K562 (cell line): ENCODE measurements at regions of chr1 and their contacts with region 1.

Region 1: DNA sequence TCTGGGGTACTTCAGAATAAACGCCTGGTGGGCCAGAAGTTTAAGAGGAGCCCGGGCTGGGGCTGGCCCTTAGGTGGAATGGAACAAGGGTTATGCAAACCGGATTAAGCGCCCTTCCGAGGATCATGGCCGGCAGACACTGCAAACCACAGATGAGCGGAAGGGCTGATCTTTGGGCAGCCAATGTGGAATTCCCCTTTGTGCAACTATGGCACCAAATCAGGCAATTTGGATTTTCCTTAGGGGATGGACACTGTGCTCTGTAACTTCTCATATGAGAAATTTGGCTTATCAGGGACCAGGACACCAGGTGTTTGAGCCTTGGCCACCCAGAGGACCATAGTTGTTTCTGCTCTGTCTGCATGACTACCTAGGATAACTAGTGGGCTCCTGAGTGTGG is 5.7 kb upstream of the IL10 start:
- DNase-seq: no peak
- ATAC-seq: no peak; the same call in 2 of the 3 replicates
- H3K4me3 ChIP-seq: no peak overlapping the region
- H3K27ac ChIP-seq: no peak overlapping the region
- H3K4me1 ChIP-seq: no peaks in the 10 kb centered on the region
- H3K27me3 ChIP-seq: peaks cover 40 to 49% of the 10 kb centered on the region in 2 experiments
- CTCF ChIP-seq: no peak
- EP300 ChIP-seq: no peak
- POLR2A ChIP-seq: no peak
- RAD21 ChIP-seq: no peak

Region 2: DNA sequence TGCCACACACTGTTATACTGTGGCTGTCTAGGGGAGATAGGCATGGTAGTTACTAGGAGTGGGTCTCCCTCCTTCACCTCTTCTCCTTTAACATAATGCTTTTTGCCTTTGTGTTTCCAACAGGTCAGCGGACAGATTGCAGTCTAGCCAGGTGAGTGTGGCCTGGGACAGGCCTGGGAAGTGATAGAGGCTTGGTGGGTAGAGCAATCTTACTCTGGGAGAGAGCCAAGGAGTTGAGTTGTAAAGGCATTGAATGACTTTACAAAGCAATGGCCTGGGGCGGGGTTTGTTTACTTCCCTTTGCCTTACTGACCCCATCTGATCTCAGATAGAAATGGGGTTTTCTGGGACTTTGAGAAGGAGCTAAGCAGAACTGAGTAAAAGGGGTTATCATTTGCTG is 358.8 kb before region 1 on chr1:
- CTCF ChIA-PET with region 1: no interaction called
- POLR2A ChIA-PET with region 1: no interaction called
- in situ Hi-C with region 1: no loop called
- intact Hi-C with region 1: no loop called
- DNase-seq: peak in 3 of 4 experiments; percentile 34 to 44 (median 42)
- ATAC-seq: peak; percentile 90
- H3K4me3 ChIP-seq: no peak overlapping the region
- H3K27ac ChIP-seq: no peak overlapping the region; the same call in 2 of the 3 replicates
- H3K4me1 ChIP-seq: peaks cover 0 to 11% of the 10 kb centered on the region in 2 experiments; a peak in 4 of 5 replicates
- H3K27me3 ChIP-seq: no peaks in the 10 kb centered on the region
- CTCF ChIP-seq: no peak
- EP300 ChIP-seq: no peak
- POLR2A ChIP-seq: no peak
- RAD21 ChIP-seq: 0 out of 4 replicates have a peak, but pooled peaks of 1 of the 2 experiments have one; percentile 21

Region 3: DNA sequence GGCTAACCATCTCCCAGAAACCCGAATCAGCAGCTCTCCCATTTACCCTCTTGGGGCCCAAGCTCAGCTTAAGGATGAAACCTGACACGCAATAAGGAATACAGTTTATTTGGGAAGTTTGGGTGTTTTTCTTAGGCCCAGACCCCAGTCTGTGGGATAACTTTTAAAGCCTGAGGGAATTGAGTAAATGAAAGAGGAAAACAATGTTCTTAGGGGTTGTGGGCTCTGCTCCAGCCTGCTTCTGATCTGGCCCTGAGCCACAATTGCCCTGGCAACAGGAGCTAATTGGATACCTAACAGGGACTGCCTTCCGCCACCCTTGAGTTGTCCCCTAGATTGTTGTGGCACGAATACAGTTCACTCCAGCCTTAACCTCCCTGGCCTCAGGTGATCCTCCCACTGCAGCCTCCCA is 122.6 kb before region 1 on chr1:
- CTCF ChIA-PET with region 1: no interaction called
- POLR2A ChIA-PET with region 1: no interaction called
- in situ Hi-C with region 1: no loop called
- intact Hi-C with region 1: no loop called
- DNase-seq: no peak
- ATAC-seq: no peak
- H3K4me3 ChIP-seq: no peak overlapping the region
- H3K27ac ChIP-seq: no peak overlapping the region
- H3K4me1 ChIP-seq: peaks cover 37 to 71% of the 10 kb centered on the region in 2 experiments
- H3K27me3 ChIP-seq: no peaks in the 10 kb centered on the region
- CTCF ChIP-seq: no peak
- EP300 ChIP-seq: no peak
- POLR2A ChIP-seq: no peak
- RAD21 ChIP-seq: no peak

Region 4: DNA sequence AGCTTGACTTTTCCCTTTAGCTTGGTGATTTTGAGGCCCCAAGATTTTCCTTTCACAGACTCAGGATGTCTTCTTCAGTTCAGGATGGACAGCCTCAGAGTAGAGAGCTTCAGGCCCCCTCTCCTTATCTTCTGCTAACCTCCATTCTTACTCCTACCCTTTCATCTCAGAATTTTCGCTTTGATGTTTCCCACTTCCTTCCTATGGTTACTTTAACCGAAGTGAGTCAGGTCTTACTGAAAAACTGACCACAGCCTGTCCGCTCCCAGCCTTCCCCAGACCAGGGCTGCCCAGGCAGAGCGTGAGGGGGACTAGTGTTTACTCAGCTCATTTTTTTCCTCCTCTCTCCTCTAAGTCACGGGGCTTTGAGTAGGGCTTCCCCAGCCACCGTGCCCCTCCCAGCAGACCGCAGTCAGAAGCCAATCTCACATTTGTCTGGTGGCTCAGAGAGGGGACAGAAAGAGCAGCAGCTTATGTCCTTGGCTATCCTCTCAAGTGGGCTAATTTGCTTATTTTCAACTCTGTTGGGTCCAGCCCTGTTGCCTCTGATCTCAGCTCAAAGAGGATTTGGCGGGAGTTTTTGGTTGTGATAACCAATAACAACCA is 11.7 kb before region 1 on chr1:
- CTCF ChIA-PET with region 1: no interaction called
- POLR2A ChIA-PET with region 1: interaction called, 12 read pairs
- in situ Hi-C with region 1: no loop called
- intact Hi-C with region 1: no loop called
- DNase-seq: peak; percentile 40 to 82 (median 58)
- ATAC-seq: peak; percentile 93
- H3K4me3 ChIP-seq: no peak overlapping the region
- H3K27ac ChIP-seq: peak overlapping the region; percentile 31; the same call in 2 of the 3 replicates
- H3K4me1 ChIP-seq: peaks cover 6 to 33% of the 10 kb centered on the region in 2 experiments
- H3K27me3 ChIP-seq: peaks cover 5 to 24% of the 10 kb centered on the region in 2 experiments; a peak in 4 of 5 replicates
- CTCF ChIP-seq: no peak
- EP300 ChIP-seq: peak; percentile 75
- POLR2A ChIP-seq: no peak
- RAD21 ChIP-seq: 0 out of 4 replicates have a peak, but pooled peaks of 1 of the 2 experiments have one; percentile 10

Region 5: DNA sequence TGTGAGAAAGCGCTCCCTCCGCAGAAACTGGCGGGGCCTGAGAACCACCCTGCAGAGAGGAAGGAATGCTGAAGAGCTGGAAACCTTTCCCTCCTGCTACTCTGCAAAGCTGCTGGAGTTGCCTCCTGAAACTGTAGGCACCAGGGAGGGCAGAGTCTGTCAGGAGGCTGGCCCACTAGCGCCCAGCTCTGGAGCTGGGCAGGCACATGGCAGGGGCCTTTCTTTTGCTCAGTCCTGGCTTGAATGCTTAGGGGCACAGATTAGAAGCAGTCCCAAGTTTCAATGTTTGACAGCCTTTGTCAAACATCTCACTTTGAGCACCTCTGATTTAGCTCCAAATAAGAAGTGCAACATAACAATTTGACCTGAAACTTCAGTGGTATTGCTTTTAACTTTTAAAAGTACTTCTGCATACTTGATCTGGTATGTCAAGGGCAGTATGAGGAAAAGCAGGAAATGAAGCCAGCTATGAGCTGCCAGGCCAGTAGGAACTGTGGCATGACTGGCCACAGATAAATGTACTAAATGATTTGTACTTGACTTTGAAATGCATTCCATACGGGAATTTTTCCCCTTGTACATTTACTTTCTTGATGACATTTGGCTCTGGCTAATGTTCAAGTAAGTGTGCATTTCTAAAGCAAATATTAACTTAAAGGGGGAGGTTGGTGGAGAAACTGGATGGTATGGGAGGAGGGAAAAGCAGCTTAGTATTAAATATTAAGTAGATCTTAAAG is 247.3 kb after region 1 on chr1:
- CTCF ChIA-PET with region 1: no interaction called
- POLR2A ChIA-PET with region 1: no interaction called
- in situ Hi-C with region 1: no loop called
- intact Hi-C with region 1: no loop called
- DNase-seq: no peak
- ATAC-seq: peak; percentile 6
- H3K4me3 ChIP-seq: peak overlapping the region; percentile 15
- H3K27ac ChIP-seq: peak overlapping the region; percentile 100
- H3K4me1 ChIP-seq: peaks cover 49 to 85% of the 10 kb centered on the region in 2 experiments
- H3K27me3 ChIP-seq: no peaks in the 10 kb centered on the region
- CTCF ChIP-seq: 0 out of 6 replicates have a peak, but pooled peaks of 1 of the 3 experiments have one; percentile 4
- EP300 ChIP-seq: peak; percentile 2; the same call in 1 of the 2 replicates
- POLR2A ChIP-seq: no peak
- RAD21 ChIP-seq: no peak; a peak in 2 of 4 replicates